ENCODE measurements at regions of chr9 and their contacts with region 1.

Region 1: DNA sequence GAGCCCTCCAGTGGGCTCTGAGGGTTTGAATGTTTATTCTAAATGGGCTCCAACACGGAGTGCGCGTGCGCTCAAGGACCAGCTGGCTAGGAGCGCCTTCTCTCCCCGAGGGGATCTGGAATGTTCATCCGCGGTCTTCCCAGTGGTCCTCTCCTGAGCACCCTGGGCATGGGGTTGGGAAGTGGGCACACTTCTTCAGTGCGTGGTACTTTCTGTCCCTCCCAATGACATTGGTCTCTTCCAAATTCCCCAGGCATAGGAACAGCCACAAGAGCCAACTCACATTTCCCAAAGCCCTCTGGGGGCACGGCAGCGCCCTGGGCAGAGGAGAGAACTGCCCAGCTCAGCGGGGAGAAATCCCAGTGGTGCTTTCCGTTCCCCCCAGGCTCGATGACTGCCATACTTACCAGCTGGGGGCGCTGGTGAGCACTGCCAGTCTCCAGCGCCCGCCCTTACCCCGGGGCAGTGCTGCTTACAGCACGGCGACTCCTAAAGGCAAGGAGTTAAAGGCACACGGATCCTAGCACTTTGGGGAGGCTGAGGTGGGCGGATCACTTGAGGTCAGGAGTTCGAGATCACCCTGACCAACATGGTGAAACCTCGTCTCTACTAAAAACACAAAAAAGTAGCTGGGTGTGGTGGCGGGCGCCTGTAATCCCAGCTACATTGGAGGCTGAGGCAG is 29.9 kb upstream of the OBP2B start:
- DNase-seq: peak; percentile 93 to 96
- ATAC-seq: peak; percentile 85 to 92
- H3K4me3 ChIP-seq: peak overlapping the region; percentile 40
- H3K27ac ChIP-seq: peak overlapping the region; percentile 59 to 87
- H3K4me1 ChIP-seq: peaks cover 5% of the 10 kb centered on the region; the same call in 1 of the 3 replicates
- CTCF ChIP-seq: peak; percentile 97
- EP300 ChIP-seq: no peak
- POLR2A ChIP-seq: no peak; the same call in 1 of the 2 replicates
- RAD21 ChIP-seq: peak; percentile 60 to 64; a peak in 4 of 5 replicates

Region 2: DNA sequence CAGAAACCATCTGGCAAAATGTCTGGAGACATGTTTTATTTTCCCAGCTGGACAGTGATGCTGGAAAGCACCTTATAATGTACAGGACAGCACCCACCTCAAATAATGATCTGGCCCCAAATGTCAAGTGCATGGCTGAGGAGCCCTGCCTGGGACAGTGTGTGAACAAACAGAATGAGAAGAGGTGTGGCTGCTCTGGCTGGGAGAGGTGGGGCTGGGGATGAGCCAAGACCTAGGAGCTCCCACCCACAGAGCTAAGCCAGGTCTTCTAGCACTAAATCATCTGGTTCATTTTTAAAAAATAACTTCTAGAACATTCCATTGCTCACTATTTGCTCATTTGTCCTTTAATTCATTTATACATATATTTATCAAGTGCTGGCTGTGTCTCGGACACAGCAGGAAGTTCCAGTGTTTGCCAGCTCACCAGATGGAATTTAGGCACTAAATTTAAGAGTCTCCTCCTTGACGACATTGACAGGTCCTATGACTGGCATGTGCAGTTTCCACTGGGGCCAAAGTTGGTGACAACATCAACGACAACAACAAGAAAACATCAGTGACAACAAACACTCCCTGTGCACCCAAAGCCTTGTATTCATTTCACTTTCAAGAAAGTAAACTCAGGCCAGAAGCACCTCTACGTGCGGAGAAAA is 509.6 kb before region 1 on chr9:
- CTCF ChIA-PET with region 1: no interaction called
- POLR2A ChIA-PET with region 1: no interaction called
- DNase-seq: no peak
- ATAC-seq: no peak; a peak in 1 of 6 replicates
- H3K4me3 ChIP-seq: no peak overlapping the region
- H3K27ac ChIP-seq: no peak overlapping the region
- H3K4me1 ChIP-seq: no peaks in the 10 kb centered on the region
- CTCF ChIP-seq: no peak
- EP300 ChIP-seq: no peak
- POLR2A ChIP-seq: no peak
- RAD21 ChIP-seq: no peak

Region 3: GRCh38 chr9:133014696-133015095 is 224.3 kb before region 1 on chr9:
- CTCF ChIA-PET with region 1: no interaction called
- POLR2A ChIA-PET with region 1: no interaction called
- DNase-seq: no peak
- ATAC-seq: no peak
- H3K4me3 ChIP-seq: no peak overlapping the region
- H3K27ac ChIP-seq: no peak overlapping the region
- H3K4me1 ChIP-seq: no peaks in the 10 kb centered on the region
- CTCF ChIP-seq: no peak
- EP300 ChIP-seq: no peak
- POLR2A ChIP-seq: no peak
- RAD21 ChIP-seq: no peak

Region 4: GRCh38 chr9:133170716-133171559 is 68.1 kb before region 1 on chr9:
- CTCF ChIA-PET with region 1: interaction called, 13 read pairs
- POLR2A ChIA-PET with region 1: no interaction called
- DNase-seq: no peak
- ATAC-seq: peak in 1 of 2 experiments; percentile 19; a peak in 1 of 6 replicates
- H3K4me3 ChIP-seq: no peak overlapping the region
- H3K27ac ChIP-seq: no peak overlapping the region
- H3K4me1 ChIP-seq: peaks cover 25% of the 10 kb centered on the region
- CTCF ChIP-seq: no peak
- EP300 ChIP-seq: no peak
- POLR2A ChIP-seq: no peak
- RAD21 ChIP-seq: no peak

Region 5: DNA sequence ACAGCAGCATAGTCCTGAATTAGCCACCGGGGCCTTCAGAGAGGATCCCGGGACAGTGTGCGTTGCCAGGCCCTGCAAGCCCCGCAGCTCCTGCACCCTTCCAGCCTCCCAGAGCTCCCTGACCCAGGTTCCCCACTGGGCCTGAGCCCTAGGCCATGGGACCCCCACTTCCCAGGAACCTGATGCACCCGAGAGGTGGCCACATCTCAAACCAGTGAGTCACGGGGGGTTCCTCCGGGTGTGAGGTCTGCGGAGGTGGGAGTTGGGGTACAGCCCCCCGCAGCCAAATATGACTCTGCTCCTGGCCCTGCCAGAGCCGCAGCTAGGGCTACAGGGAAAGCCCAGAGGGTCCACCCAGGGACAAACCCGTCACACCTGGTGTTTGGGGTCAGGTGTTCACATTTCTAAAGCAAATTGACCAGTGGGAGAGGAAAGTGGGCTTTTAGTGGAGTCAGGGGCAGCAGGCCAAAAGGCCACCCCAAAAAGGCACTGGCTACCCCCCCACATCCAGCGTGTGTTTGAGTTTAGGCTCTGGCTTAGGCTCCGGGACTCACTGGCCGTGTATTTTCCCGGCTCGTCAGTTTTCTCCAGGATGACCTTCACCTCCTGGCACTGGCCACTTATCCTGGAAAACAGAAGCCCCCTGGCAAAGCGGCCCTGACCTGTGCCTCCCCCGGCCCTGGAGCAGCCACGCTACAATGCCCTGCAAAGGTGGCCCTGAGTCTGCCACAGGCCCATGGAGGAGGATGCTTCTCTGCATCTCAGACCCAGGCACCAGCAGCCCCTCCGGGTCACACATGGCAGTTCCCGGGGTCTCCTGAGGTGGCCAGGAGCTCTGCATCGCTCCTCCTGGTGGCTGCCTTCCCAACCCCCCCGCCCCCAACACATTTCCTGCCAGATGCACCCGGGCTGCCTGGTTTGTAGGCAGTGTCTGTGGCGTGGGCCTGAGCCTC is 12.5 kb before region 1 on chr9:
- CTCF ChIA-PET with region 1: interaction called, 15 read pairs
- POLR2A ChIA-PET with region 1: no interaction called
- DNase-seq: no peak
- ATAC-seq: no peak
- H3K4me3 ChIP-seq: no peak overlapping the region
- H3K27ac ChIP-seq: no peak overlapping the region
- H3K4me1 ChIP-seq: no peaks in the 10 kb centered on the region
- CTCF ChIP-seq: no peak
- EP300 ChIP-seq: no peak
- POLR2A ChIP-seq: no peak
- RAD21 ChIP-seq: no peak

Region 6: GRCh38 chr9:133258061-133259015 is 19.3 kb after region 1 on chr9:
- CTCF ChIA-PET with region 1: interaction called, 22 read pairs
- POLR2A ChIA-PET with region 1: no interaction called
- DNase-seq: no peak
- ATAC-seq: no peak
- H3K4me3 ChIP-seq: no peak overlapping the region
- H3K27ac ChIP-seq: no peak overlapping the region
- H3K4me1 ChIP-seq: no peaks in the 10 kb centered on the region
- CTCF ChIP-seq: no peak
- EP300 ChIP-seq: no peak
- POLR2A ChIP-seq: no peak
- RAD21 ChIP-seq: no peak

Region 7: GRCh38 chr9:133306242-133307204 is 67.5 kb after region 1 on chr9:
- CTCF ChIA-PET with region 1: interaction called, 11 read pairs
- POLR2A ChIA-PET with region 1: no interaction called
- DNase-seq: no peak
- ATAC-seq: peak in 1 of 2 experiments; percentile 27; a peak in 3 of 6 replicates
- H3K4me3 ChIP-seq: no peak overlapping the region
- H3K27ac ChIP-seq: no peak overlapping the region
- H3K4me1 ChIP-seq: no peaks in the 10 kb centered on the region
- CTCF ChIP-seq: no peak
- EP300 ChIP-seq: no peak
- POLR2A ChIP-seq: no peak
- RAD21 ChIP-seq: no peak

Region 8: GRCh38 chr9:133334161-133334560 is 95.2 kb after region 1 on chr9:
- CTCF ChIA-PET with region 1: interaction called, 44 read pairs
- POLR2A ChIA-PET with region 1: interaction called, 4 read pairs
- DNase-seq: no peak
- ATAC-seq: no peak
- H3K4me3 ChIP-seq: no peak overlapping the region
- H3K27ac ChIP-seq: no peak overlapping the region
- H3K4me1 ChIP-seq: peaks cover 16% of the 10 kb centered on the region
- CTCF ChIP-seq: no peak
- EP300 ChIP-seq: no peak
- POLR2A ChIP-seq: no peak
- RAD21 ChIP-seq: no peak

Region 9: DNA sequence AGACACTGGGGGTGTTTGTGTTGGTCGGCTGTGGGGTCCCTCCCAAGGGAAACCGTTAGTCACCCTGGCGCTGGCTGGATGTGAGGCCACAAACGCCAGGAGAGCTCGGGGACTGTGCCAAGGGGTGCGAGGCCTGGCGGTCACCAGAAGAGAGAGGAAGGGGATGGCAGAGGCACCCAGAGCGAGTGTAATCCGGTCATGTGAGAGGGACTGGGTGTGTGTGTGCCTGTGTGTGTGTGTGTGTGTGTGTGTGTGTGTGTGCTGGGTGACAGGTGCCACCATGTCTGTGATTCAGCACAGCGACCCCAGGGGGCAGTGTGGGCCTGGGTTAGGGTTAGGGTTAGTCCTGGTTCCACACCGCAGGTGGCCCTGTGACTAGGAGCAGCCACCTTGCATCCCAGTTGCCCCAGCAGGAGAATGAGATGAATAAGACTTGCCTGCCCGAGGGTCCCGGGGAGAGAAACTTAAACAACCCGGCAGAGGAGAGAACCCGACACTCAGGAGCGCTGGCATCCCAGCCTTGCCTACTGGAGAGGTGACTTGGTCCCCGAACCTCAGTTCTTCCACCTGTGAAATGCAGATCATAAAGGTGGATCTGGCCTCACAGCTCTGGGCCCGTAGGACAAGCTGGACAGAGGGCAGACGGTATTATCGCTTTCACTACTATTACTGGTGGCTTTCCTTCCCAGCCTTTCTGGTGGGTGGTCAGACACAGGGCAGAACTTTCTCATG is 294.1 kb after region 1 on chr9:
- CTCF ChIA-PET with region 1: no interaction called
- POLR2A ChIA-PET with region 1: no interaction called
- DNase-seq: peak; percentile 41 to 78
- ATAC-seq: peak; percentile 43 to 83; a peak in 4 of 6 replicates
- H3K4me3 ChIP-seq: no peak overlapping the region
- H3K27ac ChIP-seq: no peak overlapping the region
- H3K4me1 ChIP-seq: no peaks in the 10 kb centered on the region
- CTCF ChIP-seq: peak; percentile 43; the same call in 2 of the 3 replicates
- EP300 ChIP-seq: no peak
- POLR2A ChIP-seq: no peak
- RAD21 ChIP-seq: peak; percentile 60 to 84